ENCODE measurements at regions of chr16 and their contacts with region 1.

Region 1: DNA sequence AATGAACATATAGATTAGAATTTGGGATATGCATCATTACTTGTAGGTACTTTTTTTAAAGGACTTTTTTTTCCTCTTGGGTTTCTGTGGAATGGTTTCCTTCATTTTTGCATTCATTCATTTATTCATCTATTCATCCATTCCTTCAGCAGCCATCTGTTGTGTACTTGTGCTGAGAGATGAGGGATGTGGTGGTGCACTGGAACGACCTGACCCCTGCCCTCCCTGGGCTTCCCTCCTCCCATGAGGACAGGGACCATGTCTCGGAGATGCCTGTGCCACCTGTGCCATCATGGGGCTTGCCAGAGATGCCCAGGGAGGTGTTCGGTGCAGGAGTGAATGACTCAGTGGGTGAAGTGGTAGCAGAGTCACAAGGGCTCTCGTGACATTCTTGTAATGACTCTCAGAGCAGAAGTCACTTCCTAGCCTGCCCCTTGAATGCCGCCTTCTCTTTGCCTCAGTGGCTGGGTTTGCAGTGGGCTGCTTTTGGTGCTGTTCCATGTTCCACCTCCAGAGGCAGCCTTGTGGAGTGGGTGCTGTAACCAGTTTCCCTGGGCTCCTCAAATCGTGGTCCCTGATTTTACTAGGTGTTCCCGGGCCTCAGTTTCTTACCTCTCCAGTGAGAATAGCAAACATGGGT is 43.9 kb downstream of the CLEC16A start:
- DNase-seq: peak; percentile 33 to 48
- H3K4me3 ChIP-seq: no peak overlapping the region
- H3K27ac ChIP-seq: 0 out of 2 replicates have a peak overlapping the region, but pooled peaks have one; percentile 9
- H3K4me1 ChIP-seq: peaks cover 59% of the 10 kb centered on the region
- H3K27me3 ChIP-seq: no peaks in the 10 kb centered on the region
- CTCF ChIP-seq: peak; percentile 75

Region 2: DNA sequence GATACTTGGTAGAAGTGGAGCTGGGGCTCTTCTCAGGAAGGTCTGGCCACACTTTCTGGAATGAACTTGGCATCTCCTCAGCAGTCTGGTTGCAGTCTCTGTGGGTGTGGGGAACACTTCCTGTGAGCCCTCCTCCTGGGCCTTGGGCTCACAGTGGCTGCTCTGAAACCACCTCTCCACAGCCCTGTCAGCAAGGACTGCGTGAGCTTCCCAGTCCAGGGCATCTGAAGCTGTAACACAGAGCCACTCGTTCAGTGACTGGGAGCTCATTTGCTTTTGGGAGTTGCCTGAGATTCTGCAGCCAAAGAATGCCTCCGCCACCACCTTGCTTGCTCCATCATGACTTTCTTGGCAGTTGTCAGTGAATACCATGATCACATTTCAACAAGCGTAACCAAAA is 16.1 kb after region 1 on chr16:
- CTCF ChIA-PET with region 1: no interaction called
- POLR2A ChIA-PET with region 1: no interaction called
- intact Hi-C with region 1: no loop called
- DNase-seq: no peak
- H3K4me3 ChIP-seq: no peak overlapping the region
- H3K27ac ChIP-seq: no peak overlapping the region
- H3K4me1 ChIP-seq: no peaks in the 10 kb centered on the region
- H3K27me3 ChIP-seq: no peaks in the 10 kb centered on the region
- CTCF ChIP-seq: no peak

Region 3: GRCh38 chr16:11016993-11017392 is 28.7 kb after region 1 on chr16:
- CTCF ChIA-PET with region 1: interaction called, 6 read pairs
- POLR2A ChIA-PET with region 1: no interaction called
- intact Hi-C with region 1: loop called (anchors 1 kb)
- DNase-seq: peak; percentile 67 to 75
- H3K4me3 ChIP-seq: no peak overlapping the region
- H3K27ac ChIP-seq: peak overlapping the region; percentile 61
- H3K4me1 ChIP-seq: peaks cover 28% of the 10 kb centered on the region
- H3K27me3 ChIP-seq: no peaks in the 10 kb centered on the region
- CTCF ChIP-seq: no peak

Region 4: DNA sequence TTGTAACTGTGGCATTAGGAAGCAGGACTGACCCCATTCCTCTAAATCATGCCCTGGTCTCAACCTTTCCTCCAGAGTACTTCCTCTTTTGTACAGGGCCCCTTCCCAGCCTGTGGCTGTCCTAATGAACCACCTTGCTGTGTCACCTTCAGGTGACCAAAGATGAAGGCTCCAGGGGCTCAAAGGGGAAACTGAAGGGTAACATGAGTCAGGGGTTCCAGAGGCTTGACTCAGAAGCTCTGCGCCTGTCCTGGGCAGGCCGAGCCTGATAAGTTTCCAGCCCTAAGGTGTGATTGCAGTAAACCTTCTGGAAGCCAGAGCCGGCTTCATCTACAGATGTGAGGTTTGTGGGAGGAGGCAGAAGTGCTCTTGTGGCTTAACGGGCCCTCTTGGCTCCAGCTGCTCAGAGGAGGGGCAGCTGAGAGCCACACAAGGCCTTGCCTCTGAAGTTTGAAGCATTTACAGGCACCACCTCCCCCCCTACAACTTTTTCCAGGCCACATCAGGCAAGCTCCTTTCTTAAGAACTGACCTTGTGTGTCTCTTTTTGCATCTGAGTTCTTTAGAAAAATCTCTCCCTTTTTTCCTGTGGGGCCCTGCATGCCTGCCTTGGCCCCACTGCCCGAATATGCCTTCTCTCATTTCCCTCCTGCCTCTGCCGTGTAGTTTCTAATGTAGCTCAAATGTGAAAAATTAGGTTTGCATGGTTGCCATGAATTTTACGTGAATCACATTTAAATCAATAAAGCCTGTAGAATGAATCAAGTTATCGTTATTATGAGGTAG is 106.0 kb after region 1 on chr16:
- CTCF ChIA-PET with region 1: no interaction called
- POLR2A ChIA-PET with region 1: interaction called, 3 read pairs
- intact Hi-C with region 1: loop called (anchors 5 kb)
- DNase-seq: peak; percentile 50 to 83
- H3K4me3 ChIP-seq: no peak overlapping the region
- H3K27ac ChIP-seq: peak overlapping the region; percentile 55
- H3K4me1 ChIP-seq: peaks cover 24% of the 10 kb centered on the region
- H3K27me3 ChIP-seq: no peaks in the 10 kb centered on the region
- CTCF ChIP-seq: no peak

Region 5: GRCh38 chr16:11126399-11127054 is 138.2 kb after region 1 on chr16:
- CTCF ChIA-PET with region 1: no interaction called
- POLR2A ChIA-PET with region 1: no interaction called
- intact Hi-C with region 1: no loop called
- DNase-seq: no peak
- H3K4me3 ChIP-seq: no peak overlapping the region
- H3K27ac ChIP-seq: no peak overlapping the region
- H3K4me1 ChIP-seq: no peaks in the 10 kb centered on the region
- H3K27me3 ChIP-seq: no peaks in the 10 kb centered on the region
- CTCF ChIP-seq: no peak

Region 6: GRCh38 chr16:11142261-11142630 is 154.0 kb after region 1 on chr16:
- CTCF ChIA-PET with region 1: no interaction called
- POLR2A ChIA-PET with region 1: interaction called, 14 read pairs
- intact Hi-C with region 1: no loop called
- DNase-seq: no peak
- H3K4me3 ChIP-seq: no peak overlapping the region
- H3K27ac ChIP-seq: no peak overlapping the region
- H3K4me1 ChIP-seq: peaks cover 19% of the 10 kb centered on the region
- H3K27me3 ChIP-seq: no peaks in the 10 kb centered on the region
- CTCF ChIP-seq: no peak

Region 7: DNA sequence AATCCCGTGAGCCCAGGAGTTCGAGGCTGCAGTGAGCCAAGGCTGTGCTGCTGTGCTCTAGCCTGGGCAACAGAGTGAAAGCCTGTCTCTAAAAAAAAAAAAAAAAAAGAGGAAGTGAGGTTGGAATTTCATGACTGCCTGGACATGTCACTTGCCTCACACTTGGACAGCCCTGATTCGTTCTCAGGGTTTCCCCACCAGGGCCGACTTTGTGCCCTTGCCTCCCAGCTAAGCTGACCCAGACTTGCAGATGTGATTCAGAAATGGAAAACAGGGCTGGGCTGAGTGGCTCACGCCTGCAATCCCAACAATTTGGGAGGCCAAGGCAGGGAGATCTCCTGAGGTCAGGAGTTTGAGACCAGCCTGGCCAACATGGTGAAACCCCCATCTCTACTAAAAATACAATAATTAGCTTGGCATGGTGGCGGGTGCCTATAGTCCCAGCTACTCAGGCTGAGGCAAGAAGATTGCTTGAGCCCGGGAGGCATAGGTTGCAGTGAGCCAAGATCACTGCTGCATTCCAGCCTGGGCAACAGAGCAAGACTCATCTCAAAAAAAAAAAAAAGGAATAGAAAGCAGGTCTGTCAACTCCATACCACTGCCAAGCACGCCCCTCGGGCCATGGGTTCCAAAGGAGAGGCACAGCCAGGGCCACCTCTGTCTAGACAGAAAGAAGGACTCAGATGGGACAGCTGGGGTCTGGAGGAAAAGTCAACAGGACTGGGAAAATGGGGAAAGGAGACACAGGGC is 220.8 kb after region 1 on chr16:
- CTCF ChIA-PET with region 1: no interaction called
- POLR2A ChIA-PET with region 1: no interaction called
- intact Hi-C with region 1: no loop called
- DNase-seq: no peak
- H3K4me3 ChIP-seq: no peak overlapping the region
- H3K27ac ChIP-seq: no peak overlapping the region
- H3K4me1 ChIP-seq: peaks cover 6% of the 10 kb centered on the region; the same call in 1 of the 2 replicates
- H3K27me3 ChIP-seq: no peaks in the 10 kb centered on the region
- CTCF ChIP-seq: no peak

Region 8: GRCh38 chr16:11312718-11313492 is 324.6 kb after region 1 on chr16:
- CTCF ChIA-PET with region 1: no interaction called
- POLR2A ChIA-PET with region 1: no interaction called
- intact Hi-C with region 1: loop called (anchors 1 kb)
- DNase-seq: peak; percentile 84 to 90
- H3K4me3 ChIP-seq: peak overlapping the region; percentile 37; the same call in 1 of the 2 replicates
- H3K27ac ChIP-seq: peak overlapping the region; percentile 73
- H3K4me1 ChIP-seq: peaks cover 29% of the 10 kb centered on the region
- H3K27me3 ChIP-seq: no peaks in the 10 kb centered on the region
- CTCF ChIP-seq: no peak

Region 9: GRCh38 chr16:11497851-11498289 is 509.6 kb after region 1 on chr16:
- CTCF ChIA-PET with region 1: no interaction called
- POLR2A ChIA-PET with region 1: no interaction called
- intact Hi-C with region 1: loop called (anchors 5 kb)
- DNase-seq: peak in 1 of 2 experiments; percentile 65
- H3K4me3 ChIP-seq: no peak overlapping the region
- H3K27ac ChIP-seq: peak overlapping the region; percentile 50
- H3K4me1 ChIP-seq: peaks cover 20% of the 10 kb centered on the region
- H3K27me3 ChIP-seq: no peaks in the 10 kb centered on the region
- CTCF ChIP-seq: no peak